ENCODE measurements at regions of chr6 and their contacts with region 1.

Region 1: DNA sequence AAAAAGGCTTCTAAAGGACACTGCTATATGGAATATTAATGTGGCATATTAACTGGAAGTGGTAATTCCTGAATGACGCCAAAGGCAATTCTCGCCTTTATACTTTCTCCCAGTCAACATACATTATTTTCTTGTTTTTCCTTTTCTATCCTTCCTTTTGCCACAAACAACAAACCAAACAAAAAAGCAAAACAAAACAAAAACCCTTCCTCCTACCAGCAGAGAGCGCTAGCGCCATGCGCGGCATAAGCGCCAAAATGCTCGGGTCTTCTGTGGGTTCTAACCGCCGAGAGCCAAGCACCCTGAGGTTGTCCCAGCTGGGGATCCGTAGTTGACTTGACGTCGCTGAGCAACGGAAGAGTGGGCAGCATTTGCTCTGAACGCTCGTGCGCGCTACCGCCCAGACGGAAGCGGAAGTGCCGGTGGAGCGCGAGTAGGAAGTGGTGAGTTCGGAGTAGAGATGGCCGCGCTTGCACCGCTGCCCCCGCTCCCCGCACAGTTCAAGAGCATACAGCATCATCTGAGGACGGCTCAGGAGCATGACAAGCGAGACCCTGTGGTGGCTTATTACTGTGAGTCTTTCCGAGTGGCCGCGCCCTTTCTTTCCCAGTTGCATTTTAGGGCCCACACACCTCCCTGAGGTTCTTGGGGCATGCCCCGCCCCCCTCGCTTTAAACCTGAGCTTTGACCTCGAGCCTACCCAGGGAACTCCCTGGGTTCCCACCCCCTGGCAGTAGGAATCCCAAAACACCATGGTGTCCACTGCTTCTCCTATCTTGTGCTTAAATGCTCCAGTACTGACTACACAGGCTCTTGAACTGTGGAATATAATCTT is at the starts of genes NMBR and VTA1:
- ATAC-seq: peak; percentile 97 to 100 (median 99)
- H3K4me3 ChIP-seq: peak within 1 kb of the TSS; percentile 60 to 89 (median 76)
- H3K27ac ChIP-seq: peak within 1 kb of the TSS; percentile 20 to 69
- H3K4me1 ChIP-seq: peaks cover 9 to 21% of the 10 kb centered on the region in 2 donors
- total RNA-seq, gene NMBR: 0.14 to 1.7 (median 0.43) TPM in 3 of 8 experiments, not detected in the others
- total RNA-seq, gene VTA1: 49.3 to 78.3 (median 57.4) TPM

Region 2: DNA sequence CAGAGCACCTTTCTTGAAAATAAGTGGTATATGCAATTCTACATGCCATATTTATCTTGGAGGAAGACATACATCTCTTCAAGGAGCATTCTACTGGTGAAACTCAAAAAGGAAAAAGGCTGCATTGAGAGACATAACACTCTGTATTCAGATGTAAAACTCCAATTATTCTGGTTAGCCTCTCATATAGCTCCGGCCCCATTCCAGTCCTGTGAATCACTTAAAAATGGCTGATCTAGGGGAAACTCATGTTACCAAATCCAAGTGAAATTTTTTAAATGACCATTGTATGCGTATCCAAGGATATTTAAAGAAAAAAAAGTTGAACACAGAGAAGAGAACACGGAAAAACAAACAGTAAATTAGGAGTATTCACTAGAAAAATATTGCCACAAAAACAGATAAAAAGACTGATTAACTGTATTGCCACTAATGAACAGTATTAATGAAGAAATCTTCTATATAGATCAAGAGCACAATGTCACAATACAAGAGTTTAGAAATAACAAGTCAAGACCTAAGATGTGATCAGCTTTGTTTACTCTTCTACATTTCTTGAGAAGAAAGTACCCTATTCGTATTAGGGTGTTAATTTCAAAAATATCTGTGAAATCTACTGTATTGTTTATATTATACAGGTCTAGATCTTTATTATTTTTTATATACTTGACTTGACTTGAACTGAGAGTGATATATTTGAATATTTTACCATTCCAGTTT is 138.9 kb before region 1 on chr6:
- in situ Hi-C with region 1: no loop called
- ATAC-seq: no peak
- H3K4me3 ChIP-seq: no peak overlapping the region
- H3K27ac ChIP-seq: no peak overlapping the region
- H3K4me1 ChIP-seq: peaks cover 0 to 3% of the 10 kb centered on the region in 2 donors

Region 3: DNA sequence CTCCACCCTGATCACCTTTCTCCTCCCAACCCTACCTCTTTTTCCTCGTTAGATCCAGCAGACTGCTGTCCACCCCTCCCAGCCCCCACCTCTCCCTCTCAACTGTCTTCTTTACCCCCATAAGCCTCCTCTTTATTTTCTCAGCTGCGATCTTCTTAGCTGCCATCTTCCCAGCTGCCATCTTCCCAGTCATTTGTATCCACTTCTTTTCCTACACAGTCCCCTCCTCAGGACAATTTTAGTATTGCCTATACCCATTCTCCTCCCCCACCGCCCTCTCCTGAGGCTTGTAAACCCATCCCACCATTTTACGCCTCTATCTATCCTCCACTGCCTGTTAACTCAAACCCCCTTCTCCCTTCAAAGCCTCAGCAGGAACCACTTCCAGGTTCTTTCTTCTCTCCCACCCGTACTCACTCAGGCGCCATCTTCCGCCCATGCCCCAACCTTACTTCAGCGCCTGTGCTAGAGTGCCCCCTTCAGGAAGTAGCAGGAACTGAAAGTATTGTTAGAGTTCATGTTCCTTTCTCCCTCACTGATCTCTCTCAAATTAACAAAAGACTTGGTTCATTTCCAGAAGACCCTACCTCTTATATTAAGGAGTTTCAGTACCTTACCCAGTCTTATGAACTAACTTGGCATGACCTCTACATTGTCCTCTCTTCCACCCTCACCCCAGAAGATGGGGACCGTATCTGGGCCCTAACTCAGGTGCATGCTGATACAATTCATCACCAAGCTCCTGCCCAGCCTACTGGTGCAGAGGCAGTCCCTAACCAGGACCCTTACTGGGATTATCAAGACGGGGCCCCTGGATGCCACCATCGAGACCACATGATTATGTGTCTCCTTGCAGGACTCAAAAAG is 390.8 kb after region 1 on chr6:
- in situ Hi-C with region 1: loop called in 1 of 9 experiments (anchors 25 kb)
- ATAC-seq: peak in 1 of 8 experiments; percentile 46
- H3K4me3 ChIP-seq: no peak overlapping the region
- H3K27ac ChIP-seq: no peak overlapping the region
- H3K4me1 ChIP-seq: no peaks in the 10 kb centered on the region

Measured in motor neuron (in vitro differentiated cells).